Heart right ventricle (tissue), 16 donors: ENCODE measurements at regions of chr22 and their contacts with region 1.

Region 1: GRCh38 chr22:32850591-32851517 is 49.3 kb downstream of the TIMP3 start:
- DNase-seq: peak; percentile 78 to 80
- ATAC-seq: peak; percentile 20 to 73 (median 60)
- H3K4me3 ChIP-seq: no peak overlapping the region
- H3K27ac ChIP-seq: peak overlapping the region; percentile 67 to 90 (median 73)
- H3K4me1 ChIP-seq: peaks cover 59 to 100% (median 99%) of the 10 kb centered on the region in 9 donors
- H3K27me3 ChIP-seq: no peaks in the 10 kb centered on the region
- CTCF ChIP-seq: no peak

Region 2: DNA sequence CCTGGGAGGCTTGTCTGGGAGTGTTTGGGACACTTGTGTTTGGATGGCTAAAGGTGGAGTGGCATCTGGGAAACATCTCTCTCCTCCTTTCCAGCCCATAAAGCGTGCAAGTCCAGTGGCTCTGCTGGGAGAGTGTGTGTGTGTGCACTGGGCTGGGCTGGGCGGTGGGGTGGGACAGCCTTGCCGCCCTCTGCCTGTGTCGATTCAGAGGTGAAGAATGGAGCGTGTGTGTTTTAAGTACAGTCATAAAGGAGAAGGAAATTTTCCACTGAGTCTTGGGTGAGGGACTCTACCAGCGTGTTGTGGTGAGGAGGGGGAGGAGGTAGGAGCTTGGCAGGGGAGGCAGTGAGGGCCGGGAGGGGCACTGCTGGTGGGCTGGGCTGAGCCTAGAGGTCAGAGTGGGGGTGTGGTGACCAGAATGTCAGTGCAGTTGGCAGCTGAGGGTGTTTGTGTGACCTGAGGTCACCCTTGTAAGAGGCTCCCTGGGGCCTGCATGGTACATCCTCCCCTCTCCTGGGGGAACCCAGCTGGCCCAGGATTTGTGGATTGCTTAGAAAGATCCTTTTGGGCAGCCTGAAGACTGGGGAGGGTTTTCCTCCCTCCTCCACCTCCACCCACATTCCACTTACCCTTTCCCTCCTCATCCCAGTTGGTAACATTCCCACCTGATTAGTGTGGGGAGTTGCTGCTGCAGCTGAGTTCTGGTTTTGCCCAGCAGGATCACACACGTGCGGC is 47.7 kb before region 1 on chr22:
- intact Hi-C with region 1: loop called in 5 of 10 experiments (anchors 1 to 5 kb)
- DNase-seq: no peak
- ATAC-seq: peak in 6 of 8 donors; percentile 10 to 47 (median 36)
- H3K4me3 ChIP-seq: peak overlapping the region; percentile 78 to 100 (median 97)
- H3K27ac ChIP-seq: peak overlapping the region; percentile 84 to 96 (median 90)
- H3K4me1 ChIP-seq: peaks cover 6 to 71% (median 50%) of the 10 kb centered on the region in 9 donors
- H3K27me3 ChIP-seq: peaks cover 0 to 24% (median 0%) of the 10 kb centered on the region in 7 donors
- CTCF ChIP-seq: no peak

Region 3: GRCh38 chr22:33083212-33083611 is 232.4 kb after region 1 on chr22:
- intact Hi-C with region 1: no loop called
- DNase-seq: no peak
- ATAC-seq: no peak
- H3K4me3 ChIP-seq: no peak overlapping the region
- H3K27ac ChIP-seq: no peak overlapping the region
- H3K4me1 ChIP-seq: no peaks in the 10 kb centered on the region
- H3K27me3 ChIP-seq: peaks cover 0 to 31% (median 0%) of the 10 kb centered on the region in 7 donors
- CTCF ChIP-seq: no peak